Psoas muscle (tissue), 8 donors: ENCODE measurements at regions of chr7 and their contacts with region 1.

Region 1: GRCh38 chr7:148884299-148885022 is 370 bp upstream of the EZH2 start:
- DNase-seq: peak; percentile 94 to 96
- ATAC-seq: peak; percentile 98 to 99 (median 99)
- H3K4me3 ChIP-seq: peak overlapping the region; percentile 93
- H3K27ac ChIP-seq: peak overlapping the region; percentile 93
- H3K4me1 ChIP-seq: no peaks in the 10 kb centered on the region
- H3K27me3 ChIP-seq: no peaks in the 10 kb centered on the region
- CTCF ChIP-seq: no peak

Region 2: DNA sequence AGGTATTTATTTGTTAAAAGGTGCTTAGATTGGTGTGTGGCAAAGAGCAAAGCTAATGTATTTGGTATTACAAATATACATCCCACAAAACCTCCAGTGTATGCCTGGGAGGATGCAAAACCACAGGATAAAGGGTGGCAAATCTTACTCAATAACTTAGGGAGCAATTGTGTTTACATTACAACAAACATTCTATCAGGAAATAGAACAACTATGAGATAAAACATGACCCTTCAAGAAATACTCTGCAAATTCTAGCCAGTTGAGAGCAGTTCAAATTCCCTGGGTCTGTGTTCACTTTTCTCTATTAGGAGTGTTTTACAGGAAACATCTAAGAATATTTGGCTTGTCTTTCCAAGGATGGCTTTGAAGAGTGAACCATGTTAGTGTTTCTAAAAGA is 120.8 kb before region 1 on chr7:
- intact Hi-C with region 1: no loop called
- DNase-seq: no peak
- ATAC-seq: no peak
- H3K4me3 ChIP-seq: no peak overlapping the region
- H3K27ac ChIP-seq: no peak overlapping the region
- H3K4me1 ChIP-seq: no peaks in the 10 kb centered on the region
- H3K27me3 ChIP-seq: no peaks in the 10 kb centered on the region
- CTCF ChIP-seq: no peak

Region 3: DNA sequence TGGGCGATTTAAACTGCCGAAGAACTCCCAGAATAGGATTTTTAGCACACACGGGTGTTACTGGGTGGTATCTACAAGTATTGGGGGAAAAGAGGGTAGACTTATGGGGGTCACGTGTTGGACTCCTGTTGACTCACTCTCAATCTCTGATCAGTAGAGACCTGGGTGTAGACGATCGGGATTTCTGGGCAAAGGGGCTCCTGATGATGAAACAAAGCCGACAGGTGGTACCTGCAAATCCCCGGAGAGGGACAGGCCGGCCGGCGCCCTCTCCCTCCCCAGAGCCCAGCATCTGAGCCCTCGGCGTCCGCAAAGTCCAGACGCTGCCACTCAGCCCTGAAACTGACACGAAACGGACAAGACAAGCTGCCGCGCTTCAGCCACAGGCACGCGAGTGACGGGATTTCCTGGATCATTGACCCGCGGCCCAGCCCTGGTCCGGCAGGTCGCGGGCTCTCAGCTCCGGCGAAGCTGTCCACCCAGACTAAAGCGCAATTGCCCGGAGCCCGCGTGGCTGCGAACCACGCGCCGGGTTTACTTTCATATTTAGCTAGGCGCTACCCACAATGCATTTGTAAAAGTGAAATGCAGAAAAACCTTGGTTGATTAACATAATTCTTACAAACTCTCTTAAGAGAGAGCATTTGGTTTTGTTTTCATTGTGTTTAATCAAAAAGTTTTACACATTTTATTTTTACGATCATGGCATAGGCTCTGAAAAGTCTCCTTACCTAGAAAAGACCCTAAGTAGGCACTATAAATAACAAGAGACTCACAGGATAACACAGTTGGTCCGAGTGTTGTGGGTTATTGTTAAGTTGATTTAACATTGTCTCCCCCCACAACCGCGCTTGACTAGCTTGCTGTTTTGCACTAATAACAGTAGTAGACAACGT is 56.5 kb after region 1 on chr7:
- intact Hi-C with region 1: loop called in 1 of 2 experiments (anchors 2 kb)
- DNase-seq: peak; percentile 83 to 91
- ATAC-seq: peak; percentile 92 to 94 (median 94)
- H3K4me3 ChIP-seq: peak overlapping the region; percentile 72
- H3K27ac ChIP-seq: peak overlapping the region; percentile 91
- H3K4me1 ChIP-seq: peaks cover 5% of the 10 kb centered on the region
- H3K27me3 ChIP-seq: no peaks in the 10 kb centered on the region
- CTCF ChIP-seq: no peak

Region 4: GRCh38 chr7:148983187-148984146 is 99.0 kb after region 1 on chr7:
- intact Hi-C with region 1: no loop called
- DNase-seq: peak; percentile 56 to 74
- ATAC-seq: peak; percentile 44 to 62 (median 54)
- H3K4me3 ChIP-seq: peak overlapping the region; percentile 75
- H3K27ac ChIP-seq: no peak overlapping the region
- H3K4me1 ChIP-seq: peaks cover 16% of the 10 kb centered on the region
- H3K27me3 ChIP-seq: peaks cover 0 to 6% (median 0%) of the 10 kb centered on the region in 3 donors
- CTCF ChIP-seq: no peak